ENCODE measurements at regions of chr17 and their contacts with region 1.

Region 1: DNA sequence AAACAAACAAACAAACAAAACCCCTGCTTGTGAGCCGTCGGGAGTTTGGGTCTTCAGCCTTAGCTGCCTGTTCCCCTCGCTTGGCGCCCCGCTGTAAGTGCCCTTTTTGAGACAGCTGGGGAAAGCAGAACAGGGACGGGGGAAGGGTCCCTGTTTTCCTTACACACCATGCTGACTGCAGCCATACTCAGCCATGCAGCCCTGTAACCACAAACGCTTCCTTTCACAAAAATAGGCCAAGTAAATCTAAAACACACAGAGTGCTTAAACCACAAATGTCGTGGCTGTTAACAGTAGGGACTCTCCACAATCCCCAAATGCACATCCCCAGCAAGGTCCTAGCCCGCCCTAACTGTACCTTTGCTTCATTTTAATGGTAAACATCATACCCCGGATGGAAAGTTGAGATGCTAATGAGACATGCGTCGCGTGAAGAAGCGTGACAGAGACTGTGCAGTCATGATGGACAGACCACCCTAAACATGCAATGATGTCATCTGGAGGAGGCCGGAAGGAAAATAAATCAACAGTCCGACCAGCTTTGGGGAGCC is 129.9 kb downstream of the MGAT5B start:
- DNase-seq: peak in 8 of 9 donors; percentile 45 to 89 (median 80)
- ATAC-seq: peak; percentile 95
- H3K4me3 ChIP-seq: peak overlapping the region; percentile 52
- H3K4me3 Mint-ChIP-seq: peak overlapping the region; percentile 58 to 88 (median 74)
- H3K27ac ChIP-seq: peak overlapping the region; percentile 70
- H3K27ac Mint-ChIP-seq: peak overlapping the region; percentile 84 to 99 (median 93)
- H3K4me1 ChIP-seq: peaks cover 33 to 57% of the 10 kb centered on the region in 2 donors
- H3K4me1 Mint-ChIP-seq: peaks cover 27 to 74% (median 57%) of the 10 kb centered on the region in 7 donors
- H3K27me3 ChIP-seq: no peaks in the 10 kb centered on the region
- H3K27me3 Mint-ChIP-seq: no peaks in the 10 kb centered on the region

Region 2: GRCh38 chr17:76631829-76632565 is 366.1 kb before region 1 on chr17:
- CTCF ChIA-PET with region 1: no interaction called
- POLR2A ChIA-PET with region 1: no interaction called
- intact Hi-C with region 1: no loop called
- DNase-seq: peak in 2 of 9 donors; percentile 9 to 32
- ATAC-seq: no peak
- H3K4me3 ChIP-seq: no peak overlapping the region
- H3K4me3 Mint-ChIP-seq: no peak overlapping the region
- H3K27ac ChIP-seq: no peak overlapping the region
- H3K27ac Mint-ChIP-seq: peak overlapping the region in 2 of 9 donors; percentile 10 to 52
- H3K4me1 ChIP-seq: no peaks in the 10 kb centered on the region
- H3K4me1 Mint-ChIP-seq: peaks cover 0 to 7% (median 0%) of the 10 kb centered on the region in 7 donors
- H3K27me3 ChIP-seq: no peaks in the 10 kb centered on the region
- H3K27me3 Mint-ChIP-seq: peaks cover 0 to 12% (median 0%) of the 10 kb centered on the region in 5 donors

Region 3: DNA sequence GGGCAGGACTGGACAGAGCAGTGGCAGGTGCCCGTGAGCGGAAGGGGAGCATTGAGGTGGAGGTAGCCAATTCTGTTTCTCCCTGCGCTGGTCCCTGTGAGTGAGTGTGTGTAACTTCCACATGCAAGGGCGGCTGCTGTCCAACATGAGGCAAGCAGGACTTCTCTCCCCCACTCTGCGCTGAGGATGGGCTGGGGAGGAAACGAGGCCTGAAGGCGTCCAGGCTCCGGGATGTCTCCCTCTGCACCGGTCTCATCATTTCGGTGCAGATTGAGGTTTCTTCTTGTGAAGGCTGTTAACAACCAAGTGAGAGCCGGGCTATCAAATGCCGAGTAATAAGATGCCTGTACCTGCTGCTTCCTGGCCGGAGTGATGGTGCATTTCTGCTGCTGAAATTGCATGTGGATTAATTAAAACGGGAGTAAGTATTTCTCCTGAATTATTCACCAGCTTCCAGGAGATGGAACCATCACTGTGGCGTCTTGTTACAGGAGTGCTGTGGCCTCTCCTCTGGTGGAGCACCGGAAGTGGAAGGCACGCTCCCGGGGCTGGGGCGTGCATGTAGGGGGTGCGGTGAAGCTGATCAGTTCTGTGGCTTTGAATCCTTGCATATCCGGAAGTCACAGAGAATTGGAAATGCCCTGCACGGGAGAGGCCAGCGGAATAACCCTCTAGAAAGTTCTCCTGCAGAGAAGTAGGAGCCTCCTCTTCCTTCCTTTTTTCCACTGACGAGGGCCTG is 171.6 kb before region 1 on chr17:
- CTCF ChIA-PET with region 1: no interaction called
- POLR2A ChIA-PET with region 1: no interaction called
- intact Hi-C with region 1: no loop called
- DNase-seq: no peak
- ATAC-seq: no peak
- H3K4me3 ChIP-seq: no peak overlapping the region
- H3K4me3 Mint-ChIP-seq: peak overlapping the region in 3 of 10 donors; percentile 4 to 49 (median 36)
- H3K27ac ChIP-seq: no peak overlapping the region
- H3K27ac Mint-ChIP-seq: no peak overlapping the region
- H3K4me1 ChIP-seq: no peaks in the 10 kb centered on the region
- H3K4me1 Mint-ChIP-seq: peaks cover 0 to 5% (median 4%) of the 10 kb centered on the region in 7 donors
- H3K27me3 ChIP-seq: no peaks in the 10 kb centered on the region
- H3K27me3 Mint-ChIP-seq: peaks cover 0 to 7% (median 0%) of the 10 kb centered on the region in 5 donors

Region 4: GRCh38 chr17:76868176-76868668 is 129.8 kb before region 1 on chr17 and contains the start of gene MGAT5B:
- CTCF ChIA-PET with region 1: no interaction called
- POLR2A ChIA-PET with region 1: no interaction called
- intact Hi-C with region 1: loop called in 1 of 2 experiments (anchors 5 kb)
- DNase-seq: peak; percentile 57 to 91 (median 79)
- ATAC-seq: peak; percentile 96
- H3K4me3 ChIP-seq: peak within 1 kb of the TSS; percentile 20
- H3K4me3 Mint-ChIP-seq: peak within 1 kb of the TSS; percentile 60 to 86 (median 81)
- H3K27ac ChIP-seq: no peak within 1 kb of the TSS
- H3K27ac Mint-ChIP-seq: peak within 1 kb of the TSS in 3 of 9 donors; percentile 15 to 82 (median 76)
- H3K4me1 ChIP-seq: peaks cover 5 to 13% of the 10 kb centered on the region in 2 donors
- H3K4me1 Mint-ChIP-seq: peaks cover 4 to 13% (median 10%) of the 10 kb centered on the region in 7 donors
- H3K27me3 ChIP-seq: peaks cover 4 to 5% of the 10 kb centered on the region in 2 donors
- H3K27me3 Mint-ChIP-seq: peaks cover 14 to 45% (median 24%) of the 10 kb centered on the region in 5 donors
- total RNA-seq, gene MGAT5B: 0.24 to 3.7 (median 2.5) TPM

Region 5: DNA sequence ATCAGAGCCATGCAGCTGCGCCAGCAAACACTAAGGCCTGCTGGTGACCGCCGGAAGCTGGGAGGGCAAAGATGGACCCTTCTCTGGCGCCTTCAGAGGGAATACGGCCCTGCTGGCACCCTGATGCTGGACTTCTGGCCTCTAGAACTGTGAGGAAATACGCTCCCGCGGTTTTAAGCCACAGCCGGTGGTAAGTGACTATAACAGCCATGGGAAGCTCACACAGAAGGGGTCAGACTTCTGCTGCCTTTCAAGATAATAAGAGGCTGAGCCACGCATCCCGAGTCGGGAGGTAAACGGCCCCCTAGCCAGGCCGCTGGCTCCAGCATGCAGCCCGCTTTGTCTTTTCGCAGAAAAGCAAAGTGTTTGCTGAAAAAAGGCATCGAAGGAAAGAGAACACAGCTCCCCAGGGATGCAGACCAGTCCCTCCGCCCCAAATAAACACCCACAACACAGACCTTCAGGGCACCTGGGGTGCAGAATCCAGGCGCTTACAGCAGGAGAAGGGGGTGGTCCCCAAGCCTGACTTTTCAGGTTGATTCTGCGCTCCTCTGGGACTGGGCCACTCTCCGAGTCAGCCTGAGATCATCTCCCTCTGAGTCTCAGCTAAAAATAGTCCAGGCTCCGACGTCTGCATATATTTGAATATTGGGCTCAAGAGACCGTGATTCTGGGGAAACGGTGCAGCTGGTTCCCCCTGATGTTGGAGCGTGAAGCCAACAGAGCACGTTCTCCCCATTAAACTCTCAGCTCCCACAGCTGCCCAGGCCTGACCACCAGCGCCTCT is 40.2 kb before region 1 on chr17:
- CTCF ChIA-PET with region 1: no interaction called
- POLR2A ChIA-PET with region 1: no interaction called
- intact Hi-C with region 1: loop called (anchors 5 kb)
- DNase-seq: no peak
- ATAC-seq: no peak
- H3K4me3 ChIP-seq: no peak overlapping the region
- H3K4me3 Mint-ChIP-seq: no peak overlapping the region
- H3K27ac ChIP-seq: no peak overlapping the region
- H3K27ac Mint-ChIP-seq: no peak overlapping the region
- H3K4me1 ChIP-seq: no peaks in the 10 kb centered on the region
- H3K4me1 Mint-ChIP-seq: peaks cover 0 to 4% (median 0%) of the 10 kb centered on the region in 7 donors
- H3K27me3 ChIP-seq: no peaks in the 10 kb centered on the region
- H3K27me3 Mint-ChIP-seq: no peaks in the 10 kb centered on the region

Region 6: GRCh38 chr17:76982408-76983074 is 15.5 kb before region 1 on chr17:
- CTCF ChIA-PET with region 1: interaction called, 9 read pairs
- POLR2A ChIA-PET with region 1: interaction called, 8 read pairs
- intact Hi-C with region 1: loop called (anchors 1 kb)
- DNase-seq: peak in 6 of 9 donors; percentile 29 to 63 (median 48)
- ATAC-seq: peak; percentile 70
- H3K4me3 ChIP-seq: no peak overlapping the region
- H3K4me3 Mint-ChIP-seq: peak overlapping the region in 9 of 10 donors; percentile 38 to 78 (median 61)
- H3K27ac ChIP-seq: peak overlapping the region; percentile 49
- H3K27ac Mint-ChIP-seq: peak overlapping the region; percentile 77 to 92 (median 86)
- H3K4me1 ChIP-seq: peaks cover 14 to 20% of the 10 kb centered on the region in 2 donors
- H3K4me1 Mint-ChIP-seq: peaks cover 8 to 30% (median 23%) of the 10 kb centered on the region in 7 donors
- H3K27me3 ChIP-seq: no peaks in the 10 kb centered on the region
- H3K27me3 Mint-ChIP-seq: peaks cover 0 to 4% (median 0%) of the 10 kb centered on the region in 5 donors

Region 7: GRCh38 chr17:77140166-77140878 is 142.3 kb after region 1 on chr17:
- CTCF ChIA-PET with region 1: no interaction called
- POLR2A ChIA-PET with region 1: no interaction called
- intact Hi-C with region 1: loop called in 1 of 2 experiments (anchors 1 kb)
- DNase-seq: peak; percentile 98 to 100 (median 99)
- ATAC-seq: peak; percentile 96
- H3K4me3 ChIP-seq: peak overlapping the region; percentile 74
- H3K4me3 Mint-ChIP-seq: peak overlapping the region; percentile 65 to 87 (median 80)
- H3K27ac ChIP-seq: peak overlapping the region; percentile 88
- H3K27ac Mint-ChIP-seq: peak overlapping the region; percentile 75 to 93 (median 90)
- H3K4me1 ChIP-seq: peaks cover 14 to 28% of the 10 kb centered on the region in 2 donors
- H3K4me1 Mint-ChIP-seq: peaks cover 32 to 73% (median 66%) of the 10 kb centered on the region in 7 donors
- H3K27me3 ChIP-seq: no peaks in the 10 kb centered on the region
- H3K27me3 Mint-ChIP-seq: no peaks in the 10 kb centered on the region

Region 8: DNA sequence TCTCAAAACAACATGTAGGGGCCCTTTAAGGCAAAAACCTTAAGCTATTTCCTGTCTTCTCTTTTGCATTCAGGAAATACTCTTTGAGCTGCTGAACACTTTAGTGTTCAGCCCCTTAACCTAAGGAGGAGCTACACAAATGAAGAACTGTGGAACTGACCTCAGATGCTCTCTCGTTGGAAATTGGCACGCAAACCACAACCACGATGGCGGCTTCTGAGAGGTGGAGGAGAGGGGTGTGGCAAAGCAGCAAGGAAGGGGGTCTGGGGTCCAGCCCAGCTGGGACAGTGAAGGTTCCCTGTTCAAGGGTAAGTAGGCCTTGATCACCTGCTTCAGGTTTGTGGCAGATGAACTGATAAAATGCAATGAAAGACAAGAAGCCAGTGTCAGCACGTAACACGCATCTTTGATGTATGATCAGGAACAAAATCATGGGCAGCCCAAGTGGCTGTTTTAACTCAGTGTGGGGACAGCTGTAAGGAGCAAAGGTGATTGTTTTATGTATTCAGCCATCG is 668.9 kb after region 1 on chr17:
- CTCF ChIA-PET with region 1: no interaction called
- POLR2A ChIA-PET with region 1: no interaction called
- intact Hi-C with region 1: loop called in 1 of 2 experiments (anchors 1 kb)
- DNase-seq: peak; percentile 37 to 87 (median 83)
- ATAC-seq: peak; percentile 90
- H3K4me3 ChIP-seq: peak overlapping the region; percentile 55
- H3K4me3 Mint-ChIP-seq: peak overlapping the region; percentile 80 to 97 (median 93)
- H3K27ac ChIP-seq: peak overlapping the region; percentile 75
- H3K27ac Mint-ChIP-seq: peak overlapping the region; percentile 96 to 99 (median 98)
- H3K4me1 ChIP-seq: peaks cover 26 to 40% of the 10 kb centered on the region in 2 donors
- H3K4me1 Mint-ChIP-seq: peaks cover 37 to 74% (median 64%) of the 10 kb centered on the region in 7 donors
- H3K27me3 ChIP-seq: no peaks in the 10 kb centered on the region
- H3K27me3 Mint-ChIP-seq: no peaks in the 10 kb centered on the region